RWPE1 (cell line): ENCODE measurements at regions of chr5 and their contacts with region 1.

Region 1: DNA sequence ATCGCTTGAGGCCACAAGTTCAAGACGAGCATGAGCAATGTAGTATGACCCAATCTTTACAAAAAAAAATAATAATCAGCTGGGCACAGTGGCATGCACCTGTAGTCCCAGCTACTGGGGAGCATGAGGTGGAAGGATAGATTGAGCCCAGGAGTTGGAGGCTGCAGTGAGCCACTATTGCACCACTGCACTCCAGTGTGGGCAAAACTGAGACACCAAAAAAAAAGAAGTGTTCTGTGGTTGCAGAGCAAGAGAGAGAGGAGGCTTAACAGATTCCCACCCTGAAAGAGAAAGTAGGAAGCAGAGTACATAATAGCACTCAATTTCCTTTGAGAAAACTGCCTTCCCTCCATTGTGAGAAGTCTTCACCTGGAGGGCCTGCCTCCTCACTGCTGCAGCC is 52.6 kb downstream of the ALDH7A1 start:
- DNase-seq: no peak
- H3K27ac ChIP-seq: no peak overlapping the region
- CTCF ChIP-seq: no peak

Region 2: DNA sequence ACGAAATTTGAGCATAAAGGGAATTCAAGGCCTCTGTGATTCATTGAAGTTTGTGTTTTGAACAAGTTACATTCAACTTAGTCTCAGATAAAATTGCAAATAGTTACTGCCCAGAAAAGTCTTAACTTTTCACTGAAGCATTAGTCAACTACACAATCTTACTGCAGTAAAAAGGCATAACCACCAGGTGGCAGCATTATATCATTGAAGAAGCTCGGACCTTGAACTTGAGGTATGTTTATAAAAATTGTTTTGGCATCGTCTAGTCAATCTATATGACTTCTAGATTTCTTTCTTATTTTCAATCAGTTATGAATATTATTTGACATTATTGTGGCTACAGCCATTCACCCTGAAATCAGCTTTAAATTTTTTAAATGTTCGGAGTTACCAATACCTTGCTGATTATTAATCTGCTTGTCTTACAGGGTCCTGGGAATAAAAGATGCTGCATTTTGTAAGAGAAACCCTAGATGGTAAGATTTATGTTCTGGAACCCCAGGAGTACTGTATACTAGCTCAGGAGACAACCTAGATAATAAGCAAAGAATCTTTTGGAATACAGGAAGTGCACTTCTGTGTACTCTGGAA is 203.1 kb before region 1 on chr5:
- CTCF ChIA-PET with region 1: interaction called, 20 read pairs
- POLR2A ChIA-PET with region 1: no interaction called
- DNase-seq: peak; percentile 63
- H3K27ac ChIP-seq: no peak overlapping the region
- CTCF ChIP-seq: peak; percentile 92

Region 3: DNA sequence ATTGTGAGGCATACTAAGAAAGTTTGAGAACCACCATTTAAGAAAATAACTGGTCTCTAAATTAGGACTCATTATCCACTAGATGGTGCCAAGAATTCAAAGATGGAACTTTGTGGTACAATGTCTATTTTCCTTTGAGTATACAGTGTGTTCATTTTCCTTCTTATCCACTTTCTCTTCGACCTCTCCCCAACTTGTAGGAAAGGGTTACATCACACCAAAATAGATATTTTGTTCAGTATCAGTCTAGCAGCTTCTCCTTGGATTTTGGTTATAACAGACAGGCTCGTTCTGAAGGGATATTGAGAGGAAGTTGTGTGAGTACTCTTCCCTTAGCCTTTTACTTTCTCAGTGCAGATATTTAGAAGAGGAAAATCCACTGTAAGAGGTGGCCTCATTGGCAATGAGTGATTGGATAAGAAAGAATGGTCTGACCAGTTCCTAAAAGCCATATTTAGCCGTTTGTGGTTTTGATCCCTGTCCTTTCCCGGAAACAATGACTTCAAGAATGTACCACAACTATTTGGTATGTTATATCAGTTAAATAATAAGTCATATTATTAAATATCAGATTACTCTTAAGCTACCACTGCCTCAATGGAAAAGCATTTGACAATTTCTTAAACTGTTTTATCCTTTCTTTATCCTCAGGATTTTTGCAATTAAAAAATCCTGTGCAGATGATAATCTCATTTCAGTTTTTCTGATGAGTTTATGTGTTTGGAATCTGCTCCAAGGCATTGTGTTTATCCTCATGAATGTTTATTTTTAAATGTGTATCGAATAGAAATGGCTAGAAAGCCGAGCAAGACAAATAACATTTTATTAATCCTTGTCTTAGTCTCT is 188.2 kb before region 1 on chr5:
- CTCF ChIA-PET with region 1: interaction called, 12 read pairs
- POLR2A ChIA-PET with region 1: no interaction called
- DNase-seq: peak; percentile 90
- H3K27ac ChIP-seq: no peak overlapping the region
- CTCF ChIP-seq: peak; percentile 72